Activated T-helper 1 cell treated with anti-CD3 and anti-CD28 coated beads, Interleukin-12 subunit alpha, Interleukin-12 subunit beta, Interleukin-2, Interleukin-4 antibody, amounts not matched to agents 30 ng/mL and 10 ng/mL and 1 ng/mL, durations not matched to agents 14 hours and 24 hours and 36 hours (primary cell): ENCODE measurements at regions of chr1 and their contacts with region 1.

Region 1: GRCh38 chr1:228457396-228458176 is 29.6 kb upstream of the RNF187 start:
- DNase-seq: peak; percentile 89
- H3K4me3 Mint-ChIP-seq: peak overlapping the region; percentile 99
- H3K27ac Mint-ChIP-seq: peak overlapping the region; percentile 100
- H3K4me1 Mint-ChIP-seq: peaks cover 59% of the 10 kb centered on the region
- H3K27me3 Mint-ChIP-seq: peaks cover 2% of the 10 kb centered on the region

Region 2: DNA sequence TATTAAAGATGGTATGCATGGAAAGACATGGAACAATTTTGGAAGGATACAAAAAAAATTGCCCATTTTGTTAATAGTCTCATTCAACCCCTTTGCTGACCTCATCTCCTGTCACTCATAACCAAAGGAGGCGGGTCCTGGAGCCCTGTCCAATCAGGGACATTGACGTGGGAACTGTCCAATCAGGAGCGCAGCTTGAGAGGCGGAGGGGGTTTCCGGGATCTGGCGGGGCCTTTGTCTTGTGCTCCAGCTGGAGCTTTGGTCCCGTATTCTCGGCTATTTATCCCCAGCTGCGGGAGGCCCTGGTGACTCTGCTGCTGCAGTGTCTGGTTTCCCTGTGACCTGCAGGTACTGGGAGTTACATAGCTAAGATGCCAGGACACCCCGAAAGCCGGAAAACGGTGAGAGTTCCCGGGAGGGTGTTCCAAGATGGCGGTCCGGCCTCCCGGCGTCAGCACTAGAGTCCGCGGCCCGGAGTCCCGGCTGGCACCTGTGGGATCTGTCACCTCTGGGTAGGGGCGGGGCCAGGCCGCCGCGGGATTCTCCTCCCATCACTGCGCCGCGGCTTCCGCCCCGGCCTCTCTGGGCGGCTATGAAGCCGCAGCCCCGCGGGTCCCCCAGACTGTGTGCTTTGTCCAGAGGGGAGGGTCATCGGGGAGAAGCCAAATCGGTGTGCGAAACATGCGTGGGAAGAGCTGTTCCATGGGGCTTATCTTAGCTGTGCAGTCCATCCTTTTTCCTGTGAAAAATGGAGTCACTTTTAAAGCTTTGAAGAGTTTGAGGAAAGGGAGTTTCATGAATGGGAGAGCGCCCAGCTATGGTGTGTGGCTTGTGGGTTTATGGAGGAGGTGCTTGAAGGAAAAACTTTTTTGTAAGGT is 894.0 kb before region 1 on chr1 and contains the start of gene ZNF678:
- intact Hi-C with region 1: loop called (anchors 2 kb)
- DNase-seq: peak; percentile 76
- H3K4me3 Mint-ChIP-seq: peak within 1 kb of the TSS; percentile 87
- H3K27ac Mint-ChIP-seq: peak within 1 kb of the TSS; percentile 88
- H3K4me1 Mint-ChIP-seq: peaks cover 22% of the 10 kb centered on the region
- H3K27me3 Mint-ChIP-seq: peaks cover 30% of the 10 kb centered on the region
- total RNA-seq, gene ZNF678: 4.2 and 5.0 TPM in 2 replicates

Region 3: DNA sequence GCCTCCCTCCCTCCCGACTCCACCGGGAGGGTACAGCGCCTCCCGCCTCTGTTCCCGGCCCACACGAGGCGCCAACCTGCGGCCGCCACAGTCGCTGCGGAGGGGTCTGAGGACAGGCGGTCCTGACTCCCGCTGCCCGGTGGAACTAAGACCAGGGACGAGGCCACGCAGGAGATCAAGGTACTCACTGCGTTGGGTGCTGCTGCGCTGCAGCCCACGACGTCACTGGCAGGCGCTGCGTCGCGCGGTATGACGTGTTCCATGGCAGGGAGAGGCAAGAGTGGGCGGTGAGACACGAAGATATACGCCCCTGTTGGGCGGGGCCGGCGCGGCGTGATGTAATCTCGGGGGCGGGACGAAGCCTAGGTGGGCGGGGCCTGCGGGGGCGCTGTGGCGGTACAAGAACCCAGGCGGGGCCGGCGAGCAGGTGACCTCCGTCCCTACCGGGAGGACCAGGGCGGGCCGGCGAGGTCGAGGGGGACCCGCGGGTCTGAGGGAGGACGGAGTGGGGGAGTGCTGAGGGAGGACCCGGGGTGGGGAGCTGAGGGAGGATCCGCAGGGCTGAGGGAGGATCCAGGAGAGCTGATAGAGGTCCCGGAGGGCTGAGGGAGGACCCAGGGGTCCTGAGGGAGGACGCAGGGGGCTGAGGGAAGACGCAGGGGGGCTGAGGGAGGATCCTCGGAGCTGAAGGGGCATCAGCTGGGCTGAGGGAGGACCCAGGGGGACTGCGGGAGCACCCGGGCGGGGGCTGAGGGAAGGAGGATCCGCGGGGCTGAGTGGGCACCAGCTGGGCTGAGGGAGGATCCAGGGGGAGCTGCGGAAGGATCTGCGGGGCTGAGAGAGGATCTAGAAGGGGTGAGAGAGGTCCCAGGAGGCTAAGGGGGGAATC is 348.3 kb before region 1 on chr1 and contains the start of gene MRPL55:
- intact Hi-C with region 1: loop called (anchors 2 kb)
- DNase-seq: peak; percentile 99
- H3K4me3 Mint-ChIP-seq: peak within 1 kb of the TSS; percentile 87
- H3K27ac Mint-ChIP-seq: peak within 1 kb of the TSS; percentile 89
- H3K4me1 Mint-ChIP-seq: peaks cover 28% of the 10 kb centered on the region
- H3K27me3 Mint-ChIP-seq: peaks cover 3% of the 10 kb centered on the region
- total RNA-seq, gene MRPL55: 53.3 and 61.7 TPM in 2 replicates

Region 4: GRCh38 chr1:228275739-228276421 is 181.7 kb before region 1 on chr1:
- intact Hi-C with region 1: loop called (anchors 2 kb)
- DNase-seq: peak; percentile 83
- H3K4me3 Mint-ChIP-seq: peak overlapping the region; percentile 73
- H3K27ac Mint-ChIP-seq: no peak overlapping the region
- H3K4me1 Mint-ChIP-seq: peaks cover 8% of the 10 kb centered on the region
- H3K27me3 Mint-ChIP-seq: no peaks in the 10 kb centered on the region

Region 5: GRCh38 chr1:228416217-228416933 is 41.2 kb before region 1 on chr1 and contains the start of gene TRIM17:
- intact Hi-C with region 1: loop called (anchors 1 kb)
- DNase-seq: peak; percentile 38
- H3K4me3 Mint-ChIP-seq: peak within 1 kb of the TSS; percentile 77
- H3K27ac Mint-ChIP-seq: peak within 1 kb of the TSS; percentile 61
- H3K4me1 Mint-ChIP-seq: peaks cover 20% of the 10 kb centered on the region
- H3K27me3 Mint-ChIP-seq: peaks cover 7% of the 10 kb centered on the region
- total RNA-seq, gene TRIM17: 1.4 and 1.7 TPM in 2 replicates

Region 6: GRCh38 chr1:228486596-228487335 is 29.2 kb after region 1 on chr1:
- intact Hi-C with region 1: loop called (anchors 1 kb)
- DNase-seq: peak; percentile 84
- H3K4me3 Mint-ChIP-seq: peak overlapping the region; percentile 97
- H3K27ac Mint-ChIP-seq: peak overlapping the region; percentile 99
- H3K4me1 Mint-ChIP-seq: peaks cover 29% of the 10 kb centered on the region
- H3K27me3 Mint-ChIP-seq: peaks cover 7% of the 10 kb centered on the region

Region 7: GRCh38 chr1:229558571-229559335 is 1101.2 kb after region 1 on chr1 and contains the start of gene ABCB10:
- intact Hi-C with region 1: loop called (anchors 2 kb)
- DNase-seq: peak; percentile 81
- H3K4me3 Mint-ChIP-seq: peak within 1 kb of the TSS; percentile 90
- H3K27ac Mint-ChIP-seq: peak within 1 kb of the TSS; percentile 83
- H3K4me1 Mint-ChIP-seq: peaks cover 49% of the 10 kb centered on the region
- H3K27me3 Mint-ChIP-seq: no peaks in the 10 kb centered on the region
- total RNA-seq, gene ABCB10: 46.2 and 47.0 TPM in 2 replicates